ENCODE measurements at regions of chrX and their contacts with region 1.

Region 1: DNA sequence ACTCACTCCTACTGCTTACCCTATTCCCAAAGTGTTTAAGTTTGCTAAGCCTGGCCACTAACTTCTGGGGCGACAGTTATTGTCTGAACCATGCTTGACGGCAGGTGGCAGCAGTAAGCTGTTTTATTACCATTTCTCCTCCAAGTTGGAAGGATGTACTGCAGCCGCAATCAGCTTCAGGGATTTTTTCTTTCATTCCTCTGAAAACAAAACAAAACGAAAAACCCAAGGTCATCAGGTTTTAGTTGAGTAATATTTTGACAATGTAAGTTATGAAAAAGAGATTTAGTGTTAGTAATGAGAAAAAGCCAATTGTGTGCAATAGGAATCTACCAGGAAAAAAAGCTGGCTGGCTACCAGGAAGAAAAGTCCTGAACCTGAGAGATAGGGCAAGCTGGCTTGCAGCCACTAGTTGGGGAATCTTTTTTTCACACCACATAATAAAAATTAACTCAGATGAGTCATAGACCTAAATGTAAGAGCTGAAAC is 13.2 kb upstream of the RAB9B start:
- DNase-seq: peak; percentile 75
- H3K4me3 Mint-ChIP-seq: no peak overlapping the region
- H3K27ac Mint-ChIP-seq: peak overlapping the region; percentile 20
- H3K4me1 Mint-ChIP-seq: no peaks in the 10 kb centered on the region
- H3K27me3 Mint-ChIP-seq: peaks cover 45% of the 10 kb centered on the region
- CTCF ChIP-seq: peak; percentile 73

Region 2: DNA sequence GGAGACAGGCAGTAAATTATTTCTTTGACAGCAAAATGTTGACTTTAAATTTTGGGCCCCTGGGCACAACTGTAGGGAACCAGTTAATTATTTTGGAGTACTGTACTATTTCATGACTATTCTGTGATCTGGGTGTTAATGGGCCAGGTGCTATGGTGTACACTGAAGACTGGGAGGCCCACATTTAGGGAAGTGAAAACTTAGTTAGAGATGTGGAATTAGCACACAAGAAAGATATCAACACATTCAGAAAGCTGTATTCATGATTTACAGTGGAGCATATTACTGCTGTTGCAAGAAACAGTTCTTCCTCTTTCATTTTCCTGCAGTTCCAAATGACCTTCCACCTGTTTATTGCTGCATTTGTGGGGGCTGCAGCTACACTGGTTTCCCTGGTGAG is 56.2 kb before region 1 on chrX:
- CTCF ChIA-PET with region 1: no interaction called
- POLR2A ChIA-PET with region 1: no interaction called
- intact Hi-C with region 1: no loop called
- DNase-seq: no peak
- H3K4me3 Mint-ChIP-seq: no peak overlapping the region
- H3K27ac Mint-ChIP-seq: no peak overlapping the region
- H3K4me1 Mint-ChIP-seq: peaks cover 7% of the 10 kb centered on the region
- H3K27me3 Mint-ChIP-seq: peaks cover 58% of the 10 kb centered on the region
- CTCF ChIP-seq: no peak

Region 3: GRCh38 chrX:103831803-103832544 is 13.2 kb before region 1 on chrX and contains the start of gene RAB9B:
- CTCF ChIA-PET with region 1: interaction called, 17 read pairs
- POLR2A ChIA-PET with region 1: no interaction called
- intact Hi-C with region 1: no loop called
- DNase-seq: peak; percentile 16
- H3K4me3 Mint-ChIP-seq: peak within 1 kb of the TSS; percentile 83
- H3K27ac Mint-ChIP-seq: no peak within 1 kb of the TSS
- H3K4me1 Mint-ChIP-seq: peaks cover 5% of the 10 kb centered on the region
- H3K27me3 Mint-ChIP-seq: peaks cover 79% of the 10 kb centered on the region
- CTCF ChIP-seq: no peak
- total RNA-seq, gene RAB9B: 0.07 TPM in 1 of 2 replicates, not detected in the other

Region 4: DNA sequence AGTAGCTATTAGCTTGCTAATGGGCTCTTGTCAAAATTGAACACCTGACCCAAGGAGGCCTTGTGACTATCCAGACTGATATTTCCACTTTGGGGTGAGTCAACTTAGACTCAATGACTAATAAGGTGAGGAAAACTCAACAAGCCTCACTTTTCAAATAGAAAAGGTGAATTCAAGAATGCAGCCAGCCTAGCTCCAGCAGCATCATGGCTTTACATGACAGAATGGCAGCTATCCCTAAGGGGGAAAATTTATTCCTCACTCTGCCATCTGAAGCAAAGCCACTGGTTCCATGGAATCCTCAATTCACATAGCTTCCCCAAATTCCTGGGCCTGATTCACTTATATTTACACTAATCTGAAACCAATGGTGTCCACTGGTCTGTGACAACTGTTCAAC is 16.0 kb after region 1 on chrX:
- CTCF ChIA-PET with region 1: interaction called, 17 read pairs
- POLR2A ChIA-PET with region 1: interaction called, 3 read pairs
- intact Hi-C with region 1: no loop called
- DNase-seq: no peak
- H3K4me3 Mint-ChIP-seq: no peak overlapping the region
- H3K27ac Mint-ChIP-seq: no peak overlapping the region
- H3K4me1 Mint-ChIP-seq: no peaks in the 10 kb centered on the region
- H3K27me3 Mint-ChIP-seq: peaks cover 54% of the 10 kb centered on the region
- CTCF ChIP-seq: no peak

Region 5: GRCh38 chrX:103918581-103919269 is 73.5 kb after region 1 on chrX:
- CTCF ChIA-PET with region 1: interaction called, 7 read pairs
- POLR2A ChIA-PET with region 1: interaction called, 15 read pairs
- intact Hi-C with region 1: no loop called
- DNase-seq: peak; percentile 65
- H3K4me3 Mint-ChIP-seq: peak overlapping the region; percentile 80
- H3K27ac Mint-ChIP-seq: peak overlapping the region; percentile 22
- H3K4me1 Mint-ChIP-seq: peaks cover 5% of the 10 kb centered on the region
- H3K27me3 Mint-ChIP-seq: peaks cover 25% of the 10 kb centered on the region
- CTCF ChIP-seq: no peak

Region 6: DNA sequence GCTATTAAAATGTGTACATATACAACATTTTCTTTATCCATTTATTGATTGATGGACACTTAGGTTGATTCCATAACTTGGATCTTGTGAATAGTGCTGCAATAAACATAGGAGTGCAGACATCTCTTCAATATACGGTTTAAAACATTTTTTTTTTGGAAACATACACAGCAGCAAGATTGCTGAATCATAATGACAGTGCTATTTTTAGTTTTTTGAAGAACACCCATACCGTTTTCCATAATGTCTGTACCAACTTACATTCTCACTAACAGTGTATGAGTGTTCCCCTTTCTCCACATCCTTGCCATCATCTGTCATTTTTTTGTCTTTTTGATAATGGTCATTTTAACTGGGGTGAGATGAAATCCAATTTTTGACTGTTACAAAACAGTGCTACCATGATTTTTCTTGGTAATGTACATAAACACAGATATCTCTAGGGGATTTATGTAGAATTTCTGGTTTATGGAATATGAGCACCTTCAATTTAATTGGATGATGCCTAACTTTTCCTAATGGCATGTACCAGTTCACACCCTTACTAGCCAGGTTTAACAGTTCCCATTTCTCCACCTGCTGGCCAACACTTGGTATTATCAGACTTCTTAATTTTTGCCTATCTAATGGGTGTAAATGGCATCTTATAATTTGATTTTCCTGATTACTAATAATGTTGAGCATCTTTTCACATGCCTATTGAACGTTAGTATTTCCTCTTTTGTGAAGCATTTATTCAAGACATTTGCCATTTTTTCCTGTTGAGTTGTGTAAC is 96.2 kb after region 1 on chrX:
- CTCF ChIA-PET with region 1: interaction called, 29 read pairs
- POLR2A ChIA-PET with region 1: interaction called, 3 read pairs
- intact Hi-C with region 1: no loop called
- DNase-seq: peak; percentile 65
- H3K4me3 Mint-ChIP-seq: no peak overlapping the region
- H3K27ac Mint-ChIP-seq: no peak overlapping the region
- H3K4me1 Mint-ChIP-seq: no peaks in the 10 kb centered on the region
- H3K27me3 Mint-ChIP-seq: peaks cover 51% of the 10 kb centered on the region
- CTCF ChIP-seq: peak; percentile 53

Region 7: GRCh38 chrX:104113222-104113965 is 268.2 kb after region 1 on chrX:
- CTCF ChIA-PET with region 1: no interaction called
- POLR2A ChIA-PET with region 1: no interaction called
- intact Hi-C with region 1: loop called (anchors 1 kb)
- DNase-seq: peak; percentile 63
- H3K4me3 Mint-ChIP-seq: peak overlapping the region; percentile 76
- H3K27ac Mint-ChIP-seq: no peak overlapping the region
- H3K4me1 Mint-ChIP-seq: peaks cover 8% of the 10 kb centered on the region
- H3K27me3 Mint-ChIP-seq: peaks cover 80% of the 10 kb centered on the region
- CTCF ChIP-seq: peak; percentile 29

Region 8: GRCh38 chrX:104136241-104137019 is 291.2 kb after region 1 on chrX:
- CTCF ChIA-PET with region 1: interaction called, 31 read pairs
- POLR2A ChIA-PET with region 1: no interaction called
- intact Hi-C with region 1: loop called (anchors 1 kb)
- DNase-seq: peak; percentile 83
- H3K4me3 Mint-ChIP-seq: peak overlapping the region; percentile 67
- H3K27ac Mint-ChIP-seq: no peak overlapping the region
- H3K4me1 Mint-ChIP-seq: no peaks in the 10 kb centered on the region
- H3K27me3 Mint-ChIP-seq: peaks cover 34% of the 10 kb centered on the region
- CTCF ChIP-seq: peak; percentile 60

Region 9: GRCh38 chrX:104376946-104377345 is 531.7 kb after region 1 on chrX:
- CTCF ChIA-PET with region 1: no interaction called
- POLR2A ChIA-PET with region 1: no interaction called
- intact Hi-C with region 1: no loop called
- DNase-seq: no peak
- H3K4me3 Mint-ChIP-seq: no peak overlapping the region
- H3K27ac Mint-ChIP-seq: no peak overlapping the region
- H3K4me1 Mint-ChIP-seq: no peaks in the 10 kb centered on the region
- H3K27me3 Mint-ChIP-seq: peaks cover 62% of the 10 kb centered on the region
- CTCF ChIP-seq: no peak